AG04449 (cell line): ENCODE measurements at regions of chr1 and their contacts with region 1.

Region 1: DNA sequence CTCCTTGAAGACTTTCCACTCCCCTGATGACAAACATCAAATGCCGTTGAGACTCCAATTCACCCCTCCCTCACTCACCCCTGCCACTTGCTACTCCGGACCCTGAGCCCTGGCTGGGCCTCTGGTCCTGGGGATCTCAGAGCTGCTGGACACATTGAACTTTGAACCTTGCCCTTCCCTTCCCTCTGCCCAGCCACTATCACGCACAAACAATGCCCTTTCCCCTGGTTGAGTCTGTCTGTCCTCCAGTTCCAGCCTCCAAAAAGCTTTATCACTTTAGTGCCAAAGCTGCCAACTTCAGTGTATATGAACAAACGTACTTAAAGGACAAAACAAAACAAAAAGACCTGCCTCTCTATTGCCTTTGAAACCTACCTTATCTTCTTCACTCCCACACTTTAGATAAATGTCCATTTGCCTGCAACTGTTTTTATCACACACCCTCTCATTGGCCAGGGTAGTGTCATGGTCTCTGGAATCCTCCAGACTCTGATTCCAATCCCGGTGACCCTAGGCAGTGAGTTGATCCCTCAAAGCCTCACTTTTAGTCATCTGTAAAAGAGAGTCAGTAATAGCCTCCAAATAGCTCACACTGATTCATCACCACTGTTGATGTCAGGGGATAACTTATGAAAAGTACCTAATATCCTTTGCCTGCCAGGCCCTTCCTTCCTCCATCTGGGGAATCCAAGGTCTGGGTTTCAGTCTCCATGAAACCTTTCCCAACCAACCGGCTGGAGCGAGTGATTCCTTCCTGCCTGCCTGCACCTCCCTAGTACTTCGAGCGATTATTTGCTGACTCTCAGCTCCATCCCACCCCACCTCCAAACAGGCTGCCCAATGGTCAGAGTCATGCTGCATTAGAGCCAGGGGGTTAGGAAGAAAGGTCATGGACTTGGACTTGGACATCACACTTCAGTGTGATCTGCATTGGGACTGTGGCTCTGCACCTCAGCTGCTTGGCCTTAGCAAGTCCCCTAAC is 15.9 kb upstream of the SPOCD1 start:
- DNase-seq: no peak
- H3K4me3 ChIP-seq: no peak overlapping the region
- CTCF ChIP-seq: no peak

Region 2: DNA sequence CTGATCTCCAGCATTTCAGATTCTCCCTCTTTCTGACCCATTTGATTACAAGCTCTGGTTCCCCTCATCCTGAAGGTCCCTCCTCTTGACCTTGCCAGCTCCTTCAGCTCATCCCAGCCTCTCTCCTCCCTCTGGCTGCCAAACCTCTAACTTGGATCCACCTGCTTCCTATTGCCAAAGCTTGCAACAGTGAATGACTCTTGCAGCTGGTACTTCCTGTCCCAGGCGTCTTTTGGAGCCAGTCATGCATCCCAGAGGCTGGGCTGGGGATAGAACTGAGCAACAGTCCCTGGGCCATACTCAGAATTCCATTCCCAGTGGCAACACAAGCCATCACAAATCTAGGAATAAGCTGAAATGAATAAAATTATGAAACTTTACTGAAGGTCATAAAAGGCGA is 11.8 kb after region 1 on chr1:
- CTCF ChIA-PET with region 1: interaction called, 14 read pairs
- POLR2A ChIA-PET with region 1: no interaction called
- DNase-seq: peak; percentile 66
- H3K4me3 ChIP-seq: no peak overlapping the region
- CTCF ChIP-seq: no peak

Region 3: DNA sequence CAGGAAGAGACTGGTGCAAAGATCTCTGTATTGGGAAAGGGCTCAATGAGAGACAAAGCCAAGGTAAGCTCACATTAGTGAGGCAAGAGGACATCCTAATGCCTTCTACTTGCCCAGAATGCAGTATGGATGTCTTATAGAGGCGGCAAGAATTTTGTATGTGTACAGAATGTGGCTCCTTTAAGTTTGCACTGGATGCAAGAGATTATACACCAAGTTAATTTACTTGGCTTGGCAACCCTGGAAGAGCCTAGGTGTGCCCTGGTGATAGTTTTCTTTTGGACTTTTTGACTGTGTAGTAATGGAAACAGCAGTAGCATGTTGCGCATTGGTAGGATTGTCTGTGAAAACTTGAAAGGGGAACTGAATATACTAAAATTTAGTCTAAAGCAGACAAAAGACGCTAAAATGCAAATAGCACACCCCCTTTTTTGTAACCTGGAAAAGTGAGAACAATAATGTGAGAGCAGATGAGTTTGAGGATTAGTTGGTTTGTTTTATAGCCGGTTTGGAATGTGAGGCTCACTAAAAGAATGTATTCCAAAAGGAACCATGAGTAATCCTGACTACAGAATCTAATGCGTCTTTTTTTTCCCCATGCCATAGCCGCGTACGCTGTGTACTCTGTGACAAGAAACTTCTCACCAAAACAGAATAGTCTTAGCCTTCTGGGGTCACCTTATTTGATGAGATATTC is 200.0 kb after region 1 on chr1:
- CTCF ChIA-PET with region 1: no interaction called
- POLR2A ChIA-PET with region 1: no interaction called
- DNase-seq: peak; percentile 36
- H3K4me3 ChIP-seq: no peak overlapping the region
- CTCF ChIP-seq: no peak